Heart left ventricle (tissue), 16 donors: ENCODE measurements at regions of chr15 and their contacts with region 1.

Region 1: DNA sequence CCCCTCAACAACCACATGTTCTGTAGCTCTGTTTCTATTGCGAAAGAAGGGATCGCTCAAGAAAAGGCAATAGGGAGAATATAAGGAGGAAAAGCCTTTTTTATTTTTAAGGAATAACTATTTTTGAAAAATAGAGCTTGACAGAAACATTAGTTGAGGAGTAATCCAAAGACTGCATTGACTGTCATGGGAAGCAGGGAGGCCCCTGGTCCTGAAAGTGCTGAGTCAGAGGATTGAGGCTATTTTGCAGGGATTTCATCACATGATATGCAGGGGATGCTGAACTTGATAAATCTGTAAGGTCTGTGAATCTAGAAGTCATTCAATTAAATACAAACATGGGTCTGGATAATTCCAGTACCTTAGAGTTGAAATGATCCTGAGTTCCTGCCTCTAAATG is 92.0 kb downstream of the MTHFS start:
- DNase-seq: no peak
- ATAC-seq: no peak
- H3K4me3 ChIP-seq: no peak overlapping the region
- H3K27ac ChIP-seq: no peak overlapping the region
- H3K4me1 ChIP-seq: no peaks in the 10 kb centered on the region
- H3K27me3 ChIP-seq: peaks cover 0 to 5% (median 0%) of the 10 kb centered on the region in 9 donors
- CTCF ChIP-seq: no peak
- POLR2A ChIP-seq: no peak

Region 2: GRCh38 chr15:79640206-79640605 is 164.6 kb before region 1 on chr15:
- intact Hi-C with region 1: loop called in 1 of 10 experiments (anchors 10 kb)
- DNase-seq: peak in 4 of 5 donors; percentile 28 to 43 (median 38)
- ATAC-seq: peak; percentile 37 to 91 (median 83)
- H3K4me3 ChIP-seq: no peak overlapping the region
- H3K27ac ChIP-seq: no peak overlapping the region
- H3K4me1 ChIP-seq: no peaks in the 10 kb centered on the region
- H3K27me3 ChIP-seq: peaks cover 0 to 5% (median 0%) of the 10 kb centered on the region in 9 donors
- CTCF ChIP-seq: no peak
- POLR2A ChIP-seq: no peak

Region 3: GRCh38 chr15:79858469-79858868 is 53.6 kb after region 1 on chr15:
- intact Hi-C with region 1: no loop called
- DNase-seq: no peak
- ATAC-seq: no peak
- H3K4me3 ChIP-seq: no peak overlapping the region
- H3K27ac ChIP-seq: no peak overlapping the region
- H3K4me1 ChIP-seq: peaks cover 0 to 3% (median 0%) of the 10 kb centered on the region in 12 donors
- H3K27me3 ChIP-seq: no peaks in the 10 kb centered on the region
- CTCF ChIP-seq: peak in 3 of 12 donors; percentile 25 to 39 (median 26)
- POLR2A ChIP-seq: no peak

Region 4: DNA sequence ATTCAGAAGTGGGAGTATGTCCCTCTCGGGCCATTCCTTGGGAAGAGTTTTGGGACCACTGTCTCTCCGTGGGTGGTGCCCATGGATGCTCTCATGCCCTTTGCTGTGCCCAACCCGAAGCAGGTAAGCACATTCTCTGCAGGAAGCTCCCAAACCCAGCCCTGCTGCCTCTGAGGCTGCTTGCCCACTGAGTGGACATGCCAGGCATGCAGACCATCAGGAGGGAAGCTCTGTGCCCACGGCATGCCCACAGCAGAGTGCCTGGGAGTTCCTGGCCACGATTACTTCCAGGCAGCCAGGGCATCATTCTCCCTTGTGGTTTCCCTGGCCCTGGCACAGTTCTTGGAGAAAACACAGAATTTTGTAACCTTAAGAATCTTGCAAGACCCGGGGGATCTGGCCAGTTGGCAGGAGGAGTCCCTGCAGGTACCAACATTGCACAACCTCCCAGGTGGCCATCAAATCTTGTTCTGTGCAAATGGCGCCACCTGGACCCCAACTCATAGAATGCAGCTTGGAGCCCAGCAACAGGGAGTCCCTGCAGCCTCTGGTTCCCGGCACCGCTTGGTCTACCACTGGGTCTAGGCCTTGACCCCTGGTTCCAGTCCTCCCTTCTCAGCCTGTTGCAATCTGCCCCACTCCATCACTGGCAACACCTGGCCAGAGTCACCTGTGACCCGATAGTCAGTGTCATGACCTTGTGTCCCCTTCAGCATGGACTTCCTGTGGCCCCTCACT is 368.4 kb after region 1 on chr15:
- intact Hi-C with region 1: no loop called
- DNase-seq: peak in 3 of 5 donors; percentile 48 to 52 (median 49)
- ATAC-seq: peak; percentile 42 to 77 (median 54)
- H3K4me3 ChIP-seq: no peak overlapping the region
- H3K27ac ChIP-seq: no peak overlapping the region
- H3K4me1 ChIP-seq: peaks cover 0 to 12% (median 0%) of the 10 kb centered on the region in 12 donors
- H3K27me3 ChIP-seq: no peaks in the 10 kb centered on the region
- CTCF ChIP-seq: peak; percentile 45 to 72 (median 62)
- POLR2A ChIP-seq: no peak